ENCODE measurements at regions of chr4 and their contacts with region 1.

Region 1: DNA sequence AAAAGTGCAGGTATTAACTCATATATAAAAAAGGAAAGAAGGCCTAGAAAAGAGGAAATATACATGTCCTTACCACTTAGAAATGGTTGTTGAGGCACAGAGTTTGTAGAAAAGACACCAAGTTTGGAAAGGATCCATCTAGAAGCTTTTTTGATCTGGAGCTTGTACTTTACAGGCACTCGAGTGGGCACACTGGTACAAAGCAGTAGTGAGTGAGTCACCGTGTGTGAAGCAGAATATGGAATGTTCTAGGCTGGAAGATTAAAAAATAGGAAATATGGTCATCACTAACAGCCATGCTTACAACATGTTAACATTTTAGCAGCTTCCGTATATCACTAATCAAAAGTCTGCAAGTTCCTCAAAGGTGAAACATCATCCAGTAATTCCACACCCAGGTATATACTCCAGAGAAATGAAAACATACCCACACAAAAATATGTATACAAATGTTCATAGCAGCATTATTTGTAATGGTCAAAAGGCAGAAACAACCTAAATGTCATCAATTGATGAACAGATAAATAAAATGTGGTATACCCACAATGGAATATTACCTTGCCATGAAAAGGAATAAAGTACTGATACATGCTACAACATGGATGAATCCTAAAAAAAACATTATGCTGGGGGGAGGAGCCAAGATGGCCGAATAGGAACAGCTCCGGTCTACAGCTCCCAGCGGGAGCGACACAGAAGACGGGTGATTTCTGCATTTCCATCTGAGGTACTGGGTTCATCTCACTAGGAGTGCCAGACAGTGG is 69.5 kb downstream of the FRYL start:
- DNase-seq: no peak
- ATAC-seq: no peak
- H3K4me3 ChIP-seq: no peak overlapping the region
- H3K27ac ChIP-seq: no peak overlapping the region
- H3K4me1 ChIP-seq: no peaks in the 10 kb centered on the region
- H3K27me3 ChIP-seq: no peaks in the 10 kb centered on the region
- CTCF ChIP-seq: no peak

Region 2: DNA sequence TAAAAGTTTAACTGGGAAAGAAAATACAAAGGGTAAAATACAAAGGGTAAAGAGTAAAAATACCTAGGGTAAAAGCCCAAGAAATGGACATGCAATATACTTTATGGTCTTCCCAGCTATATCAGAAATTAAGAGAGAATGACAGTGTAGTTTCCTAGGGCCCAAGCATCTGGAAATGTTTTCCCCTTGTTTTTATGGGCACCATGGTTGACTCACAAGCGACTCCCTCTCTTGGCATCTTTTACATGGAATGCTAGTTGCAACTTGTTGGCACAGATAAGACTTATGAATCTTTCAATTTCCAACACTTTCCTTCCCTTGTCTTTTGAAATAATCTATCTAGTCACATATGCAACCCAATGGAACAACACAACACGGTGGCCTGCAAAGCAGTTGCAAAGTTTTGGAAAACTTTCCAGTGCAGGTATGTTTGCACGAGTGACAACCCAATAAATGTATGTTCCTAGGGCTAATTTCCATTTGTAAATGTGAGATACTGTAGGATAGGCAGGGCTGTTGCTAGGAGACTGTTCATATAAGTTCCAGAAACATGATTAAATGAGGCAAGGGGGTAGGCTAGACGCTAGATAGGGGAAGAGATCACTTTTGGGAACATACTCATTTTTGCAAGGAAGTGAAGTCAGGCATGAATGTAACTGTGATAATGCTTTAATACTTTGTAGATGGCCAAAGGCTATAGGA is 239.0 kb after region 1 on chr4:
- intact Hi-C with region 1: loop called in 1 of 2 experiments (anchors 5 kb)
- DNase-seq: no peak
- ATAC-seq: no peak
- H3K4me3 ChIP-seq: no peak overlapping the region
- H3K27ac ChIP-seq: no peak overlapping the region
- H3K4me1 ChIP-seq: no peaks in the 10 kb centered on the region
- H3K27me3 ChIP-seq: no peaks in the 10 kb centered on the region
- CTCF ChIP-seq: no peak